ENCODE measurements at regions of chr10 and their contacts with region 1.

Region 1: GRCh38 chr10:78302989-78303854 is 269.6 kb downstream of the RPS24 start:
- DNase-seq: peak; percentile 91
- H3K4me3 Mint-ChIP-seq: peak overlapping the region; percentile 87
- H3K27ac Mint-ChIP-seq: peak overlapping the region; percentile 91
- H3K4me1 Mint-ChIP-seq: peaks cover 15% of the 10 kb centered on the region
- H3K27me3 Mint-ChIP-seq: peaks cover 16% of the 10 kb centered on the region

Region 2: GRCh38 chr10:77004917-77005564 is 1298.2 kb before region 1 on chr10:
- intact Hi-C with region 1: no loop called
- DNase-seq: no peak
- H3K4me3 Mint-ChIP-seq: no peak overlapping the region
- H3K27ac Mint-ChIP-seq: no peak overlapping the region
- H3K4me1 Mint-ChIP-seq: no peaks in the 10 kb centered on the region
- H3K27me3 Mint-ChIP-seq: peaks cover 3% of the 10 kb centered on the region

Region 3: DNA sequence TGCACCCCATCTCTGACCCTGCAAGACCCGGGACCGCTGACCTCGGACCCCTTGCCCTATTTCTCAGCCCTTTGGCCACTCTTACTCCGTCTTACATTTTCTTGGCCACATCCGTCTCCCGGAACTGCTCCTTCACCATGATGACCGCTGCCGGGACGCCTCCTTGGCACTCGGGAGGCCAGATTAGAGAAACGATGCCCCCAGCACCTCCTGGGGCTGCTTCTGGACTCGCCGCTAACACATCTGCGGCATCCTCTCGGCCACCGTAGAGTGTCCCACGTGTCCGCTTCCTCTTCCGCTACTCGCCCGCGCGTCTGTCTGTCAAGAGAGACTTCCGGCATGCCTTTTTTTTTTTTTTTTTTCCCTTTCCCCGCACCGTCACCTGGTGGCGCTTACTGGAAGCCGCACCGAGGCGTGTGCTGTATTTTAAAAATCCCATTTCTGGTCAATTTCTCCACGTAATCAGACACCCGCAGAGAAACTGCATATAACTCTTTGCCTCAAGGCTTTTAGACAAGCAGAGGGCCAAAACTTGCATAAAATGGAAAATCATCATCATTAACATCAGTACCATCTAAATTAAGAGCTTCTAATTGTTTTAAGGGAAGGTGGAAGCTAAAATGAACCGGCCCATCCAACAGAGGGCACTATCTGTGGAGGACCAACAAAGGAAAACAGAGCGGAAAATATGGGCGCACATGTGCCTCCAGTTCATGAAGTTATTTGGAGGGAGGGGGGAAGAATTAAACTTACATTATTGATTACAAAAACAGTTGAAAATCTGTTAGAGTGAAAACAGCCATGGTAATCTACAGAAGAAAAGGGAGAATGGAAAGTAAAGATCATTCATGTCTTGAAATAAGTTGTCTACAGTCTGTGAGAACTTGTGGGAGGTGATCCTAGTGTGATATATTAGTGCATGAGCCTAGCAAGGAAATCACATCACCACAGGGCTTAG is 273.7 kb before region 1 on chr10 and contains the start of gene POLR3A:
- intact Hi-C with region 1: loop called (anchors 1 kb)
- DNase-seq: peak; percentile 89
- H3K4me3 Mint-ChIP-seq: peak within 1 kb of the TSS; percentile 99
- H3K27ac Mint-ChIP-seq: peak within 1 kb of the TSS; percentile 91
- H3K4me1 Mint-ChIP-seq: peaks cover 28% of the 10 kb centered on the region
- H3K27me3 Mint-ChIP-seq: no peaks in the 10 kb centered on the region
- total RNA-seq, gene POLR3A: 29.5 and 30.8 TPM in 2 replicates

Region 4: GRCh38 chr10:78657163-78657861 is 354.1 kb after region 1 on chr10:
- intact Hi-C with region 1: loop called (anchors 1 kb)
- DNase-seq: peak; percentile 45
- H3K4me3 Mint-ChIP-seq: no peak overlapping the region
- H3K27ac Mint-ChIP-seq: no peak overlapping the region
- H3K4me1 Mint-ChIP-seq: no peaks in the 10 kb centered on the region
- H3K27me3 Mint-ChIP-seq: peaks cover 4% of the 10 kb centered on the region

Region 5: GRCh38 chr10:79137826-79138225 is 834.6 kb after region 1 on chr10:
- intact Hi-C with region 1: loop called (anchors 2 kb)
- DNase-seq: peak; percentile 22
- H3K4me3 Mint-ChIP-seq: peak overlapping the region; percentile 19
- H3K27ac Mint-ChIP-seq: peak overlapping the region; percentile 44
- H3K4me1 Mint-ChIP-seq: peaks cover 37% of the 10 kb centered on the region
- H3K27me3 Mint-ChIP-seq: no peaks in the 10 kb centered on the region

Region 6: DNA sequence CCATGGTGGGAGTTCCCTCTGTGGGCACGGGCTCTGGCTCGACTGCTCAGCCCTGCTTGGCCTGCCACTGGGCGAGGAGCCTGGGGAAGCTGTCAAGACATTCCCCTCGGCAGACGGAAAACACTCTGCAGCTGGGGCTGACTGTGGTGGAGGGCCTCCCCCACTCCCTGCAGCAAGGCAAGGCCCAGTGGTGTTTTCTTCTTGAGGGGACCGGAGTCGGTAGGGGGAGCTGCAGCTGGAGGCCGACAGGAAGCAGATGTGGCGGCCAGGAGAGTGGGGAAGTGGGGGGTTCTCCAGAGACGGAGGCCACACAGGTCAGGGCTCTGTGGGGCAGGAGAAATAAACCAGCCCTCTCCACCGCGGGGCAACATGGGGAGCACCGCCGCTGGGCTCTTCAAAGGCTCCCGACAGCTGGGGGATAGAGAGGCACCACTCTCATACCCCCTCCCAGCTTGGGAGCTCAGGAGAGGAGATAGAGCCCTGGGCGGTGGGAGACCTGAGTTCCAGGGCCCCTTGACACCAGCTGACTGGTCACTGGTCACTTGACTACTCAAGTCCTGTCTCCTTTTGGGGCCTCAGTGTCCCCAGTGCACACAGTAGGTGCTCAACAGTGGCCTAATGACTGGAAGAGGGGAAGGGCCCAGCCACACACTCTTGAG is 1087.5 kb after region 1 on chr10:
- intact Hi-C with region 1: no loop called
- DNase-seq: no peak
- H3K4me3 Mint-ChIP-seq: no peak overlapping the region
- H3K27ac Mint-ChIP-seq: no peak overlapping the region
- H3K4me1 Mint-ChIP-seq: no peaks in the 10 kb centered on the region
- H3K27me3 Mint-ChIP-seq: peaks cover 5% of the 10 kb centered on the region

Region 7: GRCh38 chr10:79445141-79445976 is 1142.1 kb after region 1 on chr10 and contains the start of gene ZCCHC24:
- intact Hi-C with region 1: loop called (anchors 5 kb)
- DNase-seq: peak; percentile 91
- H3K4me3 Mint-ChIP-seq: peak within 1 kb of the TSS; percentile 87
- H3K27ac Mint-ChIP-seq: peak within 1 kb of the TSS; percentile 68
- H3K4me1 Mint-ChIP-seq: peaks cover 21% of the 10 kb centered on the region
- H3K27me3 Mint-ChIP-seq: peaks cover 56% of the 10 kb centered on the region
- total RNA-seq, gene ZCCHC24: 0.52 and 0.59 TPM in 2 replicates